ENCODE measurements at regions of chr1 and their contacts with region 1.

Region 1: DNA sequence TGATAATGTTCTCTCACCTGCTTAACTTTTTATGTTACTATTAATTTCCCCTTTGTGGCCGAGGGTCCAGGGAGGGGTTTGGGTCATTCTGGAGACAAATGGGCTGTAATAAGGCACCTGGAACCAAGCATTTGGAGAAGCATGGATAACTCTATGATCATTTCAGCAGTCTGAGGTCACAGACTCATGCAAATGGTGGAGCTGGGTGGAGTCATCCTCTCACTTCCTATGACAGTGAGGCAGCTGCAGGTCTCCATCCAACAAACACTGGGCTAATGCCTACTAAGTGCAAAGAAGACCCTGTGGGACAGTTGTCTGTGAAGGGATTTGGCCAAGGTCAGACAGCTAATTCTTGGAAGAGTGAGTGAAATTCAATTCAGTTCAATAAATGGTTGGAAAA is 28.8 kb upstream of the CAMTA1 start:
- DNase-seq: no peak
- ATAC-seq: no peak
- H3K4me3 ChIP-seq: no peak overlapping the region
- H3K4me3 Mint-ChIP-seq: no peak overlapping the region
- H3K27ac ChIP-seq: no peak overlapping the region
- H3K27ac Mint-ChIP-seq: no peak overlapping the region
- H3K4me1 ChIP-seq: no peaks in the 10 kb centered on the region
- H3K4me1 Mint-ChIP-seq: no peaks in the 10 kb centered on the region
- H3K27me3 ChIP-seq: peaks cover 0 to 17% of the 10 kb centered on the region in 2 experiments
- H3K27me3 Mint-ChIP-seq: peaks cover 24 to 29% of the 10 kb centered on the region in 2 donors

Region 2: GRCh38 chr1:6743189-6744101 is 13.0 kb before region 1 on chr1:
- CTCF ChIA-PET with region 1: no interaction called
- POLR2A ChIA-PET with region 1: no interaction called
- DNase-seq: peak in 12 of 35 experiments; percentile 3 to 29 (median 12)
- ATAC-seq: peak; percentile 43 to 57 (median 48)
- H3K4me3 ChIP-seq: no peak overlapping the region
- H3K4me3 Mint-ChIP-seq: no peak overlapping the region
- H3K27ac ChIP-seq: no peak overlapping the region
- H3K27ac Mint-ChIP-seq: no peak overlapping the region
- H3K4me1 ChIP-seq: no peaks in the 10 kb centered on the region
- H3K4me1 Mint-ChIP-seq: peaks cover 8 to 12% (median 8%) of the 10 kb centered on the region in 3 donors
- H3K27me3 ChIP-seq: no peaks in the 10 kb centered on the region
- H3K27me3 Mint-ChIP-seq: peaks cover 9 to 12% of the 10 kb centered on the region in 2 donors

Region 3: DNA sequence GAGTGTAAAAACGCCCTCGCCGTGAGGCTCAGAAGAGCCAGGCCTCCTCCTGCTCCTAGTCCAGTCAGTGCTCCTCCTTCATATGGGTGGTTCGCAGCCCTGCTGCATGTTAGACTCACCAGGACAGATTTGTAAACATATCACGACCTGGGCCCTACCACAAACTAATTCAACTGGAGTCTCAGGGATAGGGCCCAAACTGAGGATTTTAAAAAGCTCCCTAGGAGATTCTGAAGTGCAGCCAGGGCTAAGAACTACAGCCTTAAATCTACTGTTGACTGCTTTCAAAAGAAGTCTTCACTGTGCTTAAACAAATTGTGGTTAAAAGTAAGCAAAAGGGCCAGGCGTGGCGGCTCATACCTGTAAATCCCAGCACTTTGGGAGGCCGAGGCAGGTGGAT is 85.8 kb after region 1 on chr1:
- CTCF ChIA-PET with region 1: no interaction called
- POLR2A ChIA-PET with region 1: interaction called in 1 of 2 experiments, 15 read pairs
- DNase-seq: no peak
- ATAC-seq: no peak
- H3K4me3 ChIP-seq: no peak overlapping the region
- H3K4me3 Mint-ChIP-seq: no peak overlapping the region
- H3K27ac ChIP-seq: no peak overlapping the region
- H3K27ac Mint-ChIP-seq: no peak overlapping the region
- H3K4me1 ChIP-seq: no peaks in the 10 kb centered on the region
- H3K4me1 Mint-ChIP-seq: peaks cover 4 to 11% (median 9%) of the 10 kb centered on the region in 3 donors
- H3K27me3 ChIP-seq: no peaks in the 10 kb centered on the region
- H3K27me3 Mint-ChIP-seq: no peaks in the 10 kb centered on the region